Activated T-helper 2 cell treated with anti-CD3 and anti-CD28 coated beads, Interferon-gamma antibody, Interleukin-2, Interleukin-4, amounts not matched to agents 10 μg/mL and 5 μg/mL and 100 μg/mL, durations not matched to agents 14 hours and 24 hours and 36 hours (primary cell): ENCODE measurements at regions of chr13 and their contacts with region 1.

Region 1: GRCh38 chr13:42392716-42393572 is 121.0 kb downstream of the AKAP11 start:
- DNase-seq: peak; percentile 49
- H3K4me3 Mint-ChIP-seq: peak overlapping the region; percentile 92
- H3K27ac Mint-ChIP-seq: peak overlapping the region; percentile 100
- H3K4me1 Mint-ChIP-seq: peaks cover 75% of the 10 kb centered on the region
- H3K27me3 Mint-ChIP-seq: no peaks in the 10 kb centered on the region

Region 2: DNA sequence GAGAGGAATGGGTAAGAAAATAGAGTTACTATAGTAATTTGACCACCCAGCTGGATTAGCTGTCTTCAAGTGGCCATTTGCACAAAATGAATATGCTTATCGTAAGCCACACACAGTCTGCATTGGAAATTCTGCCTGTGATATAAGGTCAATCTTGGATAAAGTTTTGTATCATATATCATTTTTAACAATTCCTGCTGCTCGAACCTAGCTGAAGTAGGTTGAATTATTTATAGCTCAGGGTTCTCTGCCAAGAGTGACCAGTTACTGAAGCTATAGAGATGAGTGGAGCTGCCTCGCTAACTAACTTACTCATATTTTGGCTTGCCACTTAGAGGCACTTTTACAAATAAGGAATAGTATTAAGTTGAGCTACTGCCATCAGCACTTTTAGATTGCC is 714.7 kb before region 1 on chr13:
- intact Hi-C with region 1: no loop called
- DNase-seq: no peak
- H3K4me3 Mint-ChIP-seq: no peak overlapping the region
- H3K27ac Mint-ChIP-seq: no peak overlapping the region
- H3K4me1 Mint-ChIP-seq: peaks cover 2% of the 10 kb centered on the region
- H3K27me3 Mint-ChIP-seq: no peaks in the 10 kb centered on the region

Region 3: DNA sequence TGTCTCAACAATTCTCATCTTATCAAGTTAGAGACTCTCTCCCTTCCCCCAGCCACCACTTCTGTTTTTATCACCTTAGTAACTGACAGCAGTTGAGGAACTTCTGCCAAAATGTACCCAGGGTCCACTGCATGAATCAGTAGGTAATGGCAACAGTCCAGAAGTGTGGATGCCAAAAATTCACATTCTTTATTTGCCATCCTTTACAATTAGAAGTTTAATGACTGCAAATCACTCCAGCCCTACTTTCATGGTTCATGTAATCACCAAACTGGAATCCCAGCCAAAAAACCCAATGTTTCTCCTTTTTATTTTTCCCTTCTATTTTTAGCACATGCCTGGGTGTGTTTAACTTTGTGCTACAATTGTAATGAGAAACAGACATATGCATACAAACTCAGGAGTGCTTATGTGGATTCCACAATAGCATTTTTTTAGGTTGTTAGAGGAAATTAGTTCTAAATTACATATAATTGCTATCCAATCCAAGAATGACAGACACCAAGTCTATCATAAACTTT is 692.1 kb before region 1 on chr13:
- intact Hi-C with region 1: no loop called
- DNase-seq: no peak
- H3K4me3 Mint-ChIP-seq: no peak overlapping the region
- H3K27ac Mint-ChIP-seq: no peak overlapping the region
- H3K4me1 Mint-ChIP-seq: peaks cover 5% of the 10 kb centered on the region
- H3K27me3 Mint-ChIP-seq: no peaks in the 10 kb centered on the region

Region 4: GRCh38 chr13:41916173-41916954 is 476.6 kb before region 1 on chr13:
- intact Hi-C with region 1: loop called (anchors 5 kb)
- DNase-seq: no peak
- H3K4me3 Mint-ChIP-seq: peak overlapping the region; percentile 71
- H3K27ac Mint-ChIP-seq: peak overlapping the region; percentile 93
- H3K4me1 Mint-ChIP-seq: peaks cover 53% of the 10 kb centered on the region
- H3K27me3 Mint-ChIP-seq: no peaks in the 10 kb centered on the region

Region 5: GRCh38 chr13:42271337-42272114 is 121.4 kb before region 1 on chr13:
- intact Hi-C with region 1: loop called (anchors 1 kb)
- DNase-seq: peak; percentile 95
- H3K4me3 Mint-ChIP-seq: peak overlapping the region; percentile 78
- H3K27ac Mint-ChIP-seq: peak overlapping the region; percentile 91
- H3K4me1 Mint-ChIP-seq: peaks cover 44% of the 10 kb centered on the region
- H3K27me3 Mint-ChIP-seq: no peaks in the 10 kb centered on the region

Region 6: DNA sequence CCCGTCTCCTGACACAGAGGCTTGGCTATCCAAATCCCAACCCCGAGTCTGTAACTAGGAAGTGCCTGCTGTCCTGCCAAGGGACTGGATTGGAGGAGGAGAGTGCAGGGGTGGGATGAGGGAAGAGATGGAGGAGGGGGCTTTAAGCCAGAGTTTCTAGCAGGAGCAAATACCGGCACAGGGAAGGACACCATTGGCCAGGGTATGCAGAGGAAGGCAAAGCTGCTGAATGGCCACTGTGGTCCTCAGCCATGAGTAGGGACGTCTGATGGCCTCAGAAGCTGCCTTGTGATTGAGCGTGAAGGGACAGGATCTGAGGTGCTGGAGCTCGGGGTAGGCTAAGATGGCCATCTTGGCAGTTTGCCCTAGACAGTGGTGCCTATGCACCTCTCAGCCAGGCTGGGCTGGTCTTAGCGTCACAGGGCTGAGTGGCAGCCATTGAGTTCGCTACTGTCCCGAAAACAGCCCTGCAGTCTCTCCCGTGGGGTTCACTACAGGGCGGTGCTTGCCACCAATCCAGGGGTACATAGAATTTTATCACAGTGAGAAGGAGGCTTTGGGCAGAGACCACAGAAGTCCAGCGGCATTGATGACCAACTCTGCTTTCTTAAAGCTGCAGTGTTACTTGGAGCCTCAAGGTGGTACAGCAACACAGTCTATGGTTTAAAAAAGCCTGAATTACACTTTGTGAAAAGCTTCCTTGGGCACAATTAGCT is 59.2 kb before region 1 on chr13:
- intact Hi-C with region 1: loop called (anchors 2 kb)
- DNase-seq: no peak
- H3K4me3 Mint-ChIP-seq: no peak overlapping the region
- H3K27ac Mint-ChIP-seq: peak overlapping the region; percentile 77
- H3K4me1 Mint-ChIP-seq: peaks cover 56% of the 10 kb centered on the region
- H3K27me3 Mint-ChIP-seq: no peaks in the 10 kb centered on the region

Region 7: GRCh38 chr13:42377640-42378382 is 15.1 kb before region 1 on chr13:
- intact Hi-C with region 1: loop called (anchors 1 kb)
- DNase-seq: peak; percentile 63
- H3K4me3 Mint-ChIP-seq: no peak overlapping the region
- H3K27ac Mint-ChIP-seq: peak overlapping the region; percentile 93
- H3K4me1 Mint-ChIP-seq: peaks cover 90% of the 10 kb centered on the region
- H3K27me3 Mint-ChIP-seq: no peaks in the 10 kb centered on the region

Region 8: GRCh38 chr13:42497798-42498197 is 104.9 kb after region 1 on chr13:
- intact Hi-C with region 1: loop called (anchors 1 kb)
- DNase-seq: no peak
- H3K4me3 Mint-ChIP-seq: no peak overlapping the region
- H3K27ac Mint-ChIP-seq: peak overlapping the region; percentile 83
- H3K4me1 Mint-ChIP-seq: peaks cover 65% of the 10 kb centered on the region
- H3K27me3 Mint-ChIP-seq: no peaks in the 10 kb centered on the region

Region 9: GRCh38 chr13:43054803-43055802 is 662.2 kb after region 1 on chr13:
- intact Hi-C with region 1: loop called (anchors 10 kb)
- DNase-seq: no peak
- H3K4me3 Mint-ChIP-seq: no peak overlapping the region
- H3K27ac Mint-ChIP-seq: no peak overlapping the region
- H3K4me1 Mint-ChIP-seq: peaks cover 35% of the 10 kb centered on the region
- H3K27me3 Mint-ChIP-seq: no peaks in the 10 kb centered on the region